Psoas muscle (tissue), 8 donors: ENCODE measurements at regions of chrX and their contacts with region 1.

Region 1: GRCh38 chrX:18674788-18675735 is 3.2 kb upstream of the RS1 start:
- DNase-seq: peak; percentile 72 to 86
- ATAC-seq: peak; percentile 93 to 95 (median 94)
- H3K4me3 ChIP-seq: peak overlapping the region; percentile 82
- H3K27ac ChIP-seq: peak overlapping the region; percentile 89
- H3K4me1 ChIP-seq: no peaks in the 10 kb centered on the region
- H3K27me3 ChIP-seq: no peaks in the 10 kb centered on the region
- CTCF ChIP-seq: no peak

Region 2: GRCh38 chrX:18425199-18426003 is 249.7 kb before region 1 on chrX and contains the start of gene CDKL5:
- intact Hi-C with region 1: loop called (anchors 10 kb)
- DNase-seq: peak; percentile 96 to 98
- ATAC-seq: peak; percentile 98 to 99 (median 99)
- H3K4me3 ChIP-seq: peak within 1 kb of the TSS; percentile 81
- H3K27ac ChIP-seq: peak within 1 kb of the TSS; percentile 78
- H3K4me1 ChIP-seq: no peaks in the 10 kb centered on the region
- H3K27me3 ChIP-seq: peaks cover 0 to 26% (median 0%) of the 10 kb centered on the region in 3 donors
- CTCF ChIP-seq: no peak
- total RNA-seq, gene CDKL5: 1.6 to 3.8 (median 2.9) TPM

Region 3: GRCh38 chrX:18640686-18641085 is 34.4 kb before region 1 on chrX:
- intact Hi-C with region 1: no loop called
- DNase-seq: no peak
- ATAC-seq: no peak
- H3K4me3 ChIP-seq: no peak overlapping the region
- H3K27ac ChIP-seq: no peak overlapping the region
- H3K4me1 ChIP-seq: no peaks in the 10 kb centered on the region
- H3K27me3 ChIP-seq: no peaks in the 10 kb centered on the region
- CTCF ChIP-seq: no peak

Region 4: GRCh38 chrX:18833071-18833731 is 158.1 kb after region 1 on chrX:
- intact Hi-C with region 1: loop called in 1 of 2 experiments (anchors 5 kb)
- DNase-seq: peak; percentile 58 to 84
- ATAC-seq: peak; percentile 97 to 98 (median 97)
- H3K4me3 ChIP-seq: peak overlapping the region; percentile 49
- H3K27ac ChIP-seq: peak overlapping the region; percentile 82
- H3K4me1 ChIP-seq: no peaks in the 10 kb centered on the region
- H3K27me3 ChIP-seq: no peaks in the 10 kb centered on the region
- CTCF ChIP-seq: no peak

Region 5: DNA sequence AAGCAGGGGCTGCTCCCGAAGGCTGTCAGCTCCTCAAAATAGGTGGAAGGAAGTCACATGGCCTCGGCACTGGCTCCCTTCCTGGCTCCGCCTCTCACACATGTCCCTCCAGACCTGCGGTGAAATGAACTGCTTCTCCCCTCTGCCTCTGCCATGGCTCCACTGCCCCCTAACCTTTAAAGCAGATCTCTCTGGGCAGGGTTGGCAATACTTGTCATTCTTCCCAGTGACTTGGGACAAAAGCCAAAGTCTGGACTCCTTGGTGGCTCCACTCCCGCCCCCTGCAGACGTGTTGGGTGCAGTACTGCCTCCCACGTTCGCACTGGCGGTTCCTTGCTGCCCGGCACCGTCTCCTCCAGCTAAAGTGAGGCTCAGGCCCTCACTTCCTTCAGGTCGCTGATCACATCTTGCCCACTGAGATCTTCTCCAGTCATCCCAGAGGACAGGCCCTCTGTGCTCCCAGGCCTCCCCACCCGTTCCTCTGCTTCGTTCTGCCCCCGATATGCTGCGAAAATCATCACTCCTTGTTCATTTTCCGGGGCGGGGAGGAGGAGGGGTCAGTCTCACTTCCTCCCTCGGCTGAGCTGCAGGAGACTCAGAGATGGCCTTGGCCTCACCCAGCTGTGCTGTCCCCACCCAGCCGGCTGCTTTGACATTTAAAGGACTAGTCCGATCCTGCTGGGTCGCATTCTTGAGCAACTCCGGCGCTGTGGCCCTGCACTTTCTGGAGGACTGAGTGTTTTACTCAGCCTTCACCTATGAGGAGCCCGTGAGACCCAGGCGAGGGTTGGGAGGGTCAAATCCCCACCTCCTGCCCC is 211.5 kb after region 1 on chrX:
- intact Hi-C with region 1: loop called (anchors 2 to 5 kb)
- DNase-seq: peak; percentile 77 to 90
- ATAC-seq: peak; percentile 78 to 85 (median 81)
- H3K4me3 ChIP-seq: peak overlapping the region; percentile 51
- H3K27ac ChIP-seq: peak overlapping the region; percentile 80
- H3K4me1 ChIP-seq: no peaks in the 10 kb centered on the region
- H3K27me3 ChIP-seq: no peaks in the 10 kb centered on the region
- CTCF ChIP-seq: peak; percentile 51

Region 6: GRCh38 chrX:19343535-19344408 is 668.7 kb after region 1 on chrX and contains the start of gene PDHA1:
- intact Hi-C with region 1: loop called in 1 of 2 experiments (anchors 10 kb)
- DNase-seq: peak; percentile 93 to 97
- ATAC-seq: peak; percentile 95 to 98 (median 98)
- H3K4me3 ChIP-seq: peak within 1 kb of the TSS; percentile 81
- H3K27ac ChIP-seq: peak within 1 kb of the TSS; percentile 85
- H3K4me1 ChIP-seq: no peaks in the 10 kb centered on the region
- H3K27me3 ChIP-seq: no peaks in the 10 kb centered on the region
- CTCF ChIP-seq: no peak
- total RNA-seq, gene PDHA1: 394 to 823 (median 575) TPM